Natural killer cell (primary cell): ENCODE measurements at regions of chr9 and their contacts with region 1.

Region 1: DNA sequence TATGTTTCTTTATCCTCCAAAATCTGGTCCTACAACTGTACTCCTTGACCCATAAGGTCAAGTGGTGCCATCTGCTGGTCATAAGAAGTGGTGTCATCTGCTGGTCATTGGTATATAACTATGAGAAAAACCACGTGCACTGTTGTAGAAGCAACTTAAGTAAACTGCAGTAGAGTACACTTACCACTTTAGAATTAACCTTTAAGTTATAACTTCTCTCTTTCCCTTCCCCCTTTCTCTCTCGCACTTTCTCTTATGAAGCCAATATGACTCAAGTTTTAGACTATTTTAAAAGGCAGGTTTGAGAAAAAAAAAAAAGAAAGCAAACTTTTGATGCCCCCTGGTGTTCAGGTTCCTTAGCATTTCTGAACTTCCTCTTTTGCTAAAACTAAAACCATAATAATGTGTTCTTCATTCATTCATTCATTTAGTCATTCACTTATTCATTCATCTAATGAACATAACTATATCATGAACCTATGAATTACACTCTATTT is 12.8 kb upstream of the MTAP start:
- DNase-seq: peak in 1 of 2 donors; percentile 91
- ATAC-seq: peak; percentile 94 to 99 (median 98)
- H3K4me3 ChIP-seq: peak overlapping the region; percentile 19
- H3K4me3 Mint-ChIP-seq: peak overlapping the region; percentile 55
- H3K27ac ChIP-seq: no peak overlapping the region
- H3K27ac Mint-ChIP-seq: no peak overlapping the region
- H3K4me1 ChIP-seq: no peaks in the 10 kb centered on the region
- H3K4me1 Mint-ChIP-seq: peaks cover 0 to 5% of the 10 kb centered on the region in 2 donors
- H3K27me3 ChIP-seq: peaks cover 4% of the 10 kb centered on the region
- H3K27me3 Mint-ChIP-seq: peaks cover 13 to 39% of the 10 kb centered on the region in 2 donors
- CTCF ChIP-seq: peak; percentile 97

Region 2: GRCh38 chr9:21239911-21240310 is 549.7 kb before region 1 on chr9 and contains the start of gene IFNA14:
- intact Hi-C with region 1: loop called (anchors 1 kb)
- DNase-seq: no peak
- ATAC-seq: no peak
- H3K4me3 ChIP-seq: no peak within 1 kb of the TSS
- H3K4me3 Mint-ChIP-seq: no peak within 1 kb of the TSS
- H3K27ac ChIP-seq: no peak within 1 kb of the TSS
- H3K27ac Mint-ChIP-seq: no peak within 1 kb of the TSS
- H3K4me1 ChIP-seq: no peaks in the 10 kb centered on the region
- H3K4me1 Mint-ChIP-seq: peaks cover 5 to 10% of the 10 kb centered on the region in 2 donors
- H3K27me3 ChIP-seq: no peaks in the 10 kb centered on the region
- H3K27me3 Mint-ChIP-seq: peaks cover 14 to 45% of the 10 kb centered on the region in 2 donors
- CTCF ChIP-seq: no peak
- total RNA-seq, gene IFNA14: not detected

Region 3: GRCh38 chr9:21317956-21318923 is 471.3 kb before region 1 on chr9:
- intact Hi-C with region 1: loop called (anchors 1 kb)
- DNase-seq: peak in 1 of 2 donors; percentile 66
- ATAC-seq: peak; percentile 74 to 81 (median 77)
- H3K4me3 ChIP-seq: no peak overlapping the region
- H3K4me3 Mint-ChIP-seq: no peak overlapping the region
- H3K27ac ChIP-seq: no peak overlapping the region
- H3K27ac Mint-ChIP-seq: peak overlapping the region in 1 of 2 donors; percentile 66
- H3K4me1 ChIP-seq: no peaks in the 10 kb centered on the region
- H3K4me1 Mint-ChIP-seq: peaks cover 0 to 4% of the 10 kb centered on the region in 2 donors
- H3K27me3 ChIP-seq: no peaks in the 10 kb centered on the region
- H3K27me3 Mint-ChIP-seq: peaks cover 0 to 5% of the 10 kb centered on the region in 2 donors
- CTCF ChIP-seq: peak; percentile 70

Region 4: GRCh38 chr9:21326526-21327139 is 463.0 kb before region 1 on chr9:
- intact Hi-C with region 1: loop called (anchors 1 kb)
- DNase-seq: peak in 1 of 2 donors; percentile 76
- ATAC-seq: peak; percentile 71 to 93 (median 86)
- H3K4me3 ChIP-seq: no peak overlapping the region
- H3K4me3 Mint-ChIP-seq: no peak overlapping the region
- H3K27ac ChIP-seq: no peak overlapping the region
- H3K27ac Mint-ChIP-seq: peak overlapping the region in 1 of 2 donors; percentile 33
- H3K4me1 ChIP-seq: no peaks in the 10 kb centered on the region
- H3K4me1 Mint-ChIP-seq: peaks cover 47 to 58% of the 10 kb centered on the region in 2 donors
- H3K27me3 ChIP-seq: no peaks in the 10 kb centered on the region
- H3K27me3 Mint-ChIP-seq: no peaks in the 10 kb centered on the region
- CTCF ChIP-seq: peak; percentile 82

Region 5: GRCh38 chr9:21434202-21435014 is 355.2 kb before region 1 on chr9:
- intact Hi-C with region 1: loop called (anchors 1 kb)
- DNase-seq: peak in 1 of 2 donors; percentile 74
- ATAC-seq: peak in 1 of 3 donors; percentile 49
- H3K4me3 ChIP-seq: no peak overlapping the region
- H3K4me3 Mint-ChIP-seq: no peak overlapping the region
- H3K27ac ChIP-seq: no peak overlapping the region
- H3K27ac Mint-ChIP-seq: no peak overlapping the region
- H3K4me1 ChIP-seq: no peaks in the 10 kb centered on the region
- H3K4me1 Mint-ChIP-seq: no peaks in the 10 kb centered on the region
- H3K27me3 ChIP-seq: no peaks in the 10 kb centered on the region
- H3K27me3 Mint-ChIP-seq: peaks cover 28 to 33% of the 10 kb centered on the region in 2 donors
- CTCF ChIP-seq: peak; percentile 43

Region 6: DNA sequence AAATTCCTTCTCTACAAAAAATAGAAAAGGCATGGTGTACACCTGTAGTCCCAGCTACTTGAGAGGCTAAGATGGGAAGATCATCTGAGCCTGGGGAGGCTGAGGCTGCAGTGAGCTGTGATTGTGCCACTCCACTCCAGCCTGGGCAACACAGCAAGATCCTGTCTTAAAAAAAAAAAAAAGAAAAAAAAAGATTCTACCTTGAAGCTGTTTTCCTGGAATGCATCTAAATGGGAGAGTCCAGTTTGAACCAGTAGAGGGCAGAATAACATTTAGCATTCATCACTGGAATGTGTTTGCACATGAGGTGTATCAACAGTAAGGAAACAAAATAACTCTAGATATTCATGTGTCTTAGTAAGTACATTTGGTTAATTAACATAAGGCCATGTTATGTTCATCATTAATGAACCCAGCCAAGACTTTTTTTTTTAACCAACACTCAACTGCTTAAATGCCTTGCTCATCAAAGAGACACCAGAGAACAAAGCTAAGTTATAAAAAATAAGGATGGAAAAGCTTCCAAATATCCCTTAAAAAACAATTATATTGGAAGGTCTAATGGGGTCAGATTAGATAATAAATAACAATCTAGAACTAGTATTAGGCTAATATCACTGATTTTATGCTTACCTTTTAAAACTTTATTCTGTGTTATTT is 323.6 kb before region 1 on chr9:
- intact Hi-C with region 1: loop called (anchors 1 kb)
- DNase-seq: peak in 1 of 2 donors; percentile 76
- ATAC-seq: peak; percentile 55 to 69 (median 65)
- H3K4me3 ChIP-seq: no peak overlapping the region
- H3K4me3 Mint-ChIP-seq: no peak overlapping the region
- H3K27ac ChIP-seq: no peak overlapping the region
- H3K27ac Mint-ChIP-seq: no peak overlapping the region
- H3K4me1 ChIP-seq: no peaks in the 10 kb centered on the region
- H3K4me1 Mint-ChIP-seq: no peaks in the 10 kb centered on the region
- H3K27me3 ChIP-seq: peaks cover 2% of the 10 kb centered on the region
- H3K27me3 Mint-ChIP-seq: peaks cover 19 to 47% of the 10 kb centered on the region in 2 donors
- CTCF ChIP-seq: peak; percentile 78

Region 7: DNA sequence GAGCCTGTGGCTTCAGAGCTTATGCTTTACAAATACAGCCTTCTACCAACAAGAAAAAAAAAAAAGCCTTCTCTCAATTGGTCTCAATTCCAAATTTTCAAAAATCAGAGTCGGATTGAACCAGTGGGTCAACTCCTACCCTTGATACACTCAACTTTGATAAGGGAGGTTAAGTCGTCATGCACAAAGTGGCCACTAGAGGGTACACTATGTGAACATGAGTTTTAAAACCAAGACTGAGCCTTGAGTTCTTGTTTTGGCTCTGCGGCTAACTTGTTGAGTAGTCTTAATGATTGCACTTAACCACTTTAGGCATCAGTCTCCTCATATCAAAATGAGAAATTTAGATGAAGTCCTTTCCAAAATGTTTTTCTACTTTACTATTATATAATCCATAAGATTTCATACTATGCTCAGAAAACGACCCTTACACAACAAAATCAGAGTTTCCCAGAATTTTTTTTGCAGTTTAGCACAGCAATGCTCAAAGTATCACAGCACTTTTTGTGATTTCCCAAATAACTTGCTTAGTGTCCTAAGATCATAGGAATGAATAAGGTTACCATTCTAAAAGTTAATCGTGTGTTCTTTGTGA is 80.0 kb before region 1 on chr9:
- intact Hi-C with region 1: loop called (anchors 5 kb)
- DNase-seq: peak in 1 of 2 donors; percentile 79
- ATAC-seq: peak; percentile 68 to 81 (median 71)
- H3K4me3 ChIP-seq: no peak overlapping the region
- H3K4me3 Mint-ChIP-seq: no peak overlapping the region
- H3K27ac ChIP-seq: no peak overlapping the region
- H3K27ac Mint-ChIP-seq: no peak overlapping the region
- H3K4me1 ChIP-seq: no peaks in the 10 kb centered on the region
- H3K4me1 Mint-ChIP-seq: peaks cover 0 to 6% of the 10 kb centered on the region in 2 donors
- H3K27me3 ChIP-seq: no peaks in the 10 kb centered on the region
- H3K27me3 Mint-ChIP-seq: peaks cover 20 to 36% of the 10 kb centered on the region in 2 donors
- CTCF ChIP-seq: peak; percentile 92

Region 8: DNA sequence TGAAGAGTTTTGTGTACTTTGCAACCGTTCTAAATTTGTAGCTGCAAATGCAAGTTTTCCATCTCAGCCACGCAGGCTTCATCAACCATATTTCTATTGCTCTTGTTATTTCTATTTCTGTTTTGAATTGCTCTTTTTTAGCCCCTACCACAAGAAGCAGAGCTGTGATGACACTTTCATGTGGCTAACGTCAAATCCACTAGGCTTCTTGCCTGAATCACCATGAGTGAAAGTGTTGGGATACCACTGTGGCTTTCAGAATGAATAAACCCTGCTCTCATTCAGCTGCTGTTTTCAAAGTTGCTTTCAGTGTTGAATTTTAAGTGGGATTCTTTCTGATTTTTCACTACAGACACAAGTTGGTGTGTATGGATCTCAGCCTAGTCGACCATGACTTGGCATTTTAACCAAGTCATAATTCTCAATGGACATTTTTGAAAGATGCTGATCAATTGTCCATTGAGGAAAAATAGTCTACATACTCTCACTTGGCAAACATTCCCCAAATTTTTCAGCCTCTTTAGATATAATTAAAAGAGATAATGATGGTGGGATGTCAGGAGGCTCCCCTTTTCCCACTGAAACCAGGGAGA is 28.2 kb before region 1 on chr9:
- intact Hi-C with region 1: no loop called
- DNase-seq: no peak
- ATAC-seq: no peak
- H3K4me3 ChIP-seq: no peak overlapping the region
- H3K4me3 Mint-ChIP-seq: no peak overlapping the region
- H3K27ac ChIP-seq: no peak overlapping the region
- H3K27ac Mint-ChIP-seq: no peak overlapping the region
- H3K4me1 ChIP-seq: no peaks in the 10 kb centered on the region
- H3K4me1 Mint-ChIP-seq: no peaks in the 10 kb centered on the region
- H3K27me3 ChIP-seq: no peaks in the 10 kb centered on the region
- H3K27me3 Mint-ChIP-seq: peaks cover 18 to 46% of the 10 kb centered on the region in 2 donors
- CTCF ChIP-seq: no peak